Esophagus squamous epithelium (tissue), 5 donors: ENCODE measurements at regions of chr4 and their contacts with region 1.

Region 1: DNA sequence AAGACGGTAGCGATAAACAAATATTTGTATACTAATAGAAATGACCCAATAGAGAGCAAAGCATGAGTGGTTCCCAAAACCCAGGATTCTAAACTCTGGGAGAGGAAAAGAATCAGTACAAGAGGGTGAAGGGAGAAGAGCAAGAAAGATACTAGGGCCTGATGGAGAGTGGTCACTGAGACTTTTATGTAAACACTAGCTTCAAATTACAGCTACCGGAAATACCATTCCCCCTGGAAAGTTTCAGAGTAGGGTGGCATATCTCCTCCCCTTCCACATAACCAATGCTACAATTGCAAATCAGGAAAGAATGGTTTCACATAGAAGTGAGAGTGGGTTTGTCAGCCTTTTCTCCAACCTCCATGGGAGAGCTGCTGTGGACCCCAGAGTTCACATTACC is 77.1 kb downstream of the EIF4E start:
- DNase-seq: no peak
- H3K4me3 ChIP-seq: no peak overlapping the region
- H3K27ac ChIP-seq: no peak overlapping the region
- H3K4me1 ChIP-seq: no peaks in the 10 kb centered on the region
- H3K27me3 ChIP-seq: no peaks in the 10 kb centered on the region
- CTCF ChIP-seq: no peak
- POLR2A ChIP-seq: no peak

Region 2: GRCh38 chr4:98452091-98452490 is 399.7 kb before region 1 on chr4:
- intact Hi-C with region 1: loop called (anchors 10 kb)
- DNase-seq: no peak
- H3K4me3 ChIP-seq: no peak overlapping the region
- H3K27ac ChIP-seq: no peak overlapping the region
- H3K4me1 ChIP-seq: peaks cover 0 to 15% (median 2%) of the 10 kb centered on the region in 3 donors
- H3K27me3 ChIP-seq: no peaks in the 10 kb centered on the region
- CTCF ChIP-seq: no peak
- POLR2A ChIP-seq: no peak

Region 3: GRCh38 chr4:98706200-98706813 is 145.5 kb before region 1 on chr4:
- intact Hi-C with region 1: no loop called
- DNase-seq: no peak
- H3K4me3 ChIP-seq: no peak overlapping the region
- H3K27ac ChIP-seq: no peak overlapping the region
- H3K4me1 ChIP-seq: no peaks in the 10 kb centered on the region
- H3K27me3 ChIP-seq: no peaks in the 10 kb centered on the region
- CTCF ChIP-seq: no peak
- POLR2A ChIP-seq: no peak

Region 4: DNA sequence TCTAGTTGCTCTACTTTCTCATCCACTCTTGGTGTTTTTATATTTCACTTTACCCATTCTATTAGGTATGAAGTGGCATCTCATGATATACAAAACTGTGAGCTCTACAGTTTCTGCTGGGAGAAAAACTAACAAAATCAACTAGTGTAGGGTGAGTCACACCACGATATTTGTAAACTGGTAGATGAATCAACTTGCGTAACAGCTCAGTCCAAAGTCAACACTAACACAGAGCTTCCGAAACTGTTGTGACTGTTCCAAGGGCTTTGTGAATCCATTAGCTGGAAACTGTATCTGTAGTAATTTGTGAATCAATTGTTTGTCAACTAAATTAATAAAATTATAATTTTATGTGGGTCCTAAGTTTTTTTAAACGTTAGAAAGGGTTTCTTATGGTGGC is 73.6 kb before region 1 on chr4:
- intact Hi-C with region 1: no loop called
- DNase-seq: no peak
- H3K4me3 ChIP-seq: no peak overlapping the region
- H3K27ac ChIP-seq: peak overlapping the region; percentile 55 to 78 (median 68)
- H3K4me1 ChIP-seq: peaks cover 0 to 49% (median 8%) of the 10 kb centered on the region in 3 donors
- H3K27me3 ChIP-seq: no peaks in the 10 kb centered on the region
- CTCF ChIP-seq: no peak
- POLR2A ChIP-seq: no peak

Region 5: DNA sequence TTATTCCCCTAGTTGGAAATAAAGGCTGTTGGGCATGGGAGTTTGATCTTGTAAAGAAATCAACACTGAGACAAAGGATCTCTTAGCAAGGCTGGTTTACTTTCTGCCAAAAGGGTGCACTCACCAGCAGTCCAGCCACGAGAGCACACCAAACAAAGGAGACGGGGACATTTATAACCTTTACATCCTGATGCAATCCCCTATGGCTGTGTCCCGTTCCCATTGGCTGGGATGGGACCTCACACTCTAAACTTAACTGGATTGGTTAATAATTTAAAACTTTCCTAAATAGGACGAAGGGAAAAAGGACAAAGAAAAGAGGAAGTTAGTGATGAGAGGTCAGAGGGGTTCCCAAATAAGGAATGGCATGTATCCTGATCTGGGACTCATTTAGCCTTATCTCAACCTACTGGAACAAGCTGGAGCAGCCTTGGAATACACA is 161.6 kb after region 1 on chr4:
- intact Hi-C with region 1: no loop called
- DNase-seq: no peak
- H3K4me3 ChIP-seq: no peak overlapping the region
- H3K27ac ChIP-seq: peak overlapping the region; percentile 30 to 74 (median 60)
- H3K4me1 ChIP-seq: peaks cover 0 to 40% (median 10%) of the 10 kb centered on the region in 3 donors
- H3K27me3 ChIP-seq: no peaks in the 10 kb centered on the region
- CTCF ChIP-seq: no peak
- POLR2A ChIP-seq: no peak